MCF 10A (cell line): ENCODE measurements at regions of chr3 and their contacts with region 1.

Region 1: GRCh38 chr3:190424478-190425439 is 24.9 kb downstream of the TMEM207 start:
- DNase-seq: peak; percentile 83
- H3K4me3 Mint-ChIP-seq: no peak overlapping the region
- H3K27ac Mint-ChIP-seq: peak overlapping the region; percentile 71
- H3K4me1 Mint-ChIP-seq: no peaks in the 10 kb centered on the region
- H3K27me3 Mint-ChIP-seq: no peaks in the 10 kb centered on the region
- CTCF ChIP-seq: peak; percentile 64

Region 2: DNA sequence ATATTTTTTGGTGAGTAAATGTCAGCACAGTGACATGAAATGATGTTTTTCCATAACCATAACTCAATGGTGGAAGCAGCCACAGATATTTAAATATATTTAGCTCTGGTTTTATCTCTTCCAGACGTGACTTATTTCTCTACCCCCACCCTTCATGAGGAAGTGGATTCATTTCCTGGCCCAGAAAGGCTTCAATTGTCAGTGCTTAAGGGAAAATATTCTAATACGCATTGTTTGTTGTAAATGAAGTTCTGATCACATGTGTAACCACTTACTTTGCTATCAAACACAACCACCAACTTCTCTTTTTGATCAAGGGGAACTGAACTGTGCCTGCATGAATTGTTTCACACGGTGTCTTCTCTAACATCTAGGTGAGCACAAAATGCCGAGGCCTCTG is 22.8 kb before region 1 on chr3:
- CTCF ChIA-PET with region 1: interaction called, 12 read pairs
- POLR2A ChIA-PET with region 1: no interaction called
- intact Hi-C with region 1: no loop called
- DNase-seq: no peak
- H3K4me3 Mint-ChIP-seq: no peak overlapping the region
- H3K27ac Mint-ChIP-seq: no peak overlapping the region
- H3K4me1 Mint-ChIP-seq: no peaks in the 10 kb centered on the region
- H3K27me3 Mint-ChIP-seq: no peaks in the 10 kb centered on the region
- CTCF ChIP-seq: no peak

Region 3: GRCh38 chr3:190414297-190414696 is 10.5 kb before region 1 on chr3:
- CTCF ChIA-PET with region 1: interaction called, 21 read pairs
- POLR2A ChIA-PET with region 1: interaction called, 7 read pairs
- intact Hi-C with region 1: no loop called
- DNase-seq: no peak
- H3K4me3 Mint-ChIP-seq: no peak overlapping the region
- H3K27ac Mint-ChIP-seq: no peak overlapping the region
- H3K4me1 Mint-ChIP-seq: no peaks in the 10 kb centered on the region
- H3K27me3 Mint-ChIP-seq: no peaks in the 10 kb centered on the region
- CTCF ChIP-seq: no peak

Region 4: DNA sequence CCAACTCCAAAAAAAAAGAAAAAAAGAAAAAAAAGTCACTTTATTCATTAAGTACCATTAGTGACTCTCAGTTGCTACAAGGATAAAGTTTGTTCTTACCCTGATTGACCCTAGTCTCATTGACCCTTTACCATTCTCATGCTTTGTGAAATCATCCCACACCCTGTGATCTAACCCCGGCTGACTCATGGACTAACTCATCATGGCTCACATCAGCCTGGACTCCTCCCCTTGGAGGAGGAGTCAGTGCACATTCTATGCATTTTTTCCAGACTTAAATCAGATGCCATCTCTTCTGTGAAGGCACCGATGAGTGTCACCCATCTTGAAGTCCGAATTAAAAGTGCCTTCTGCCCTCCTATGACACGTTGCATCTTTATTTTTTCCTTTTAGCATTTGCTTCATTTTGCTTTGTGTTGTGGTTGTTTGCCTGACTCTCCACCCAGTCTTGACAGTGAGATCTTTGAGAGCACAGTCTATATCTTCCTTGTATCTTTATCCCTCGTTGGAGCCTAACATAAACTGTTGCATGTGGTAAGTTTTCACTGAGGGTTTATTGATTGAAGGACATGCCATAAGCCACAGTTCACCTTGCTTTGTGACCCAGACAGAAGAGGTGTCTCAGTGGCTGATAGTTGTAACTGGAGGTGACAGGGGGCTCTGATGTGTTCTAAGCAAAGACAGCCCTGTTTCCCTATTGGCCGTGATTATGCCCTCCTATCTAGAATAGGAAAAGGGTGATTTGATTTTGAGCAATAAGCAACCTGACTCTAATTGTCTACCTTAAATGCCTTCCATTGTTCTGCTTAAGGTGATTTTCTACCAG is 161.3 kb after region 1 on chr3:
- CTCF ChIA-PET with region 1: no interaction called
- POLR2A ChIA-PET with region 1: no interaction called
- intact Hi-C with region 1: no loop called
- DNase-seq: peak; percentile 97
- H3K4me3 Mint-ChIP-seq: peak overlapping the region; percentile 48
- H3K27ac Mint-ChIP-seq: peak overlapping the region; percentile 78
- H3K4me1 Mint-ChIP-seq: peaks cover 27% of the 10 kb centered on the region
- H3K27me3 Mint-ChIP-seq: no peaks in the 10 kb centered on the region
- CTCF ChIP-seq: no peak

Region 5: GRCh38 chr3:190826018-190826417 is 401.3 kb after region 1 on chr3:
- CTCF ChIA-PET with region 1: no interaction called
- POLR2A ChIA-PET with region 1: no interaction called
- intact Hi-C with region 1: no loop called
- DNase-seq: peak; percentile 68
- H3K4me3 Mint-ChIP-seq: no peak overlapping the region
- H3K27ac Mint-ChIP-seq: no peak overlapping the region
- H3K4me1 Mint-ChIP-seq: peaks cover 21% of the 10 kb centered on the region
- H3K27me3 Mint-ChIP-seq: no peaks in the 10 kb centered on the region
- CTCF ChIP-seq: no peak

Region 6: GRCh38 chr3:190972840-190973270 is 548.1 kb after region 1 on chr3:
- CTCF ChIA-PET with region 1: no interaction called
- POLR2A ChIA-PET with region 1: no interaction called
- intact Hi-C with region 1: no loop called
- DNase-seq: peak; percentile 43
- H3K4me3 Mint-ChIP-seq: no peak overlapping the region
- H3K27ac Mint-ChIP-seq: no peak overlapping the region
- H3K4me1 Mint-ChIP-seq: peaks cover 4% of the 10 kb centered on the region
- H3K27me3 Mint-ChIP-seq: no peaks in the 10 kb centered on the region
- CTCF ChIP-seq: no peak